ENCODE measurements at regions of chr18 and their contacts with region 1.

Region 1: DNA sequence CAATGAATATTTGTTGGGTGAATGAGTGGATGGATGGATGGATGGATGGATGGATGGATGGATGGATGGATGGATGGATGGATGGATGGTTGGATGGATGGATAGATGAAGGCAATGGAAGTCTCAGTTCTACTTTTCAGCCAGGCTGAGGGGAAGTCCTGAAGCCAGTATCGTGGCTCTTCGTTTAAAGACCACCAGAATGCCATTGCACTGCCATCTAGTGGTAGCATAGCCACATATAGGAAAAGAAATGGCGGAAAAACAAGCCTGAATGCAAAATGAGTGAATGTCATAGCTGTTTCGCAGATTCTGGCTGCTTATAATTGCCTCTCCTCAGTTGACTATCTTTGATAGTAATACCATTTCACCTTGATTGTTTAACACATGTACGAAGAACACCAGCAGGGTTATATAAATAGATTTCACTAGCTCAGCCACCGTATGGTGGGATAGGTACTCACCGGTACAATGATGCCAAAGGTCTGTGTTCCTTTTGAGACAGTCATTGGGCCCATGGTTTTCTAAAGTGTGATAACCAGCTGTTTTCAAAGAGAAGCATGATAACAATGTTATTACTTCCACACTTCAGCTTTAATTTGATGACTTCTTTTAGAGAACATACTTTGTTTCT is 62.3 kb upstream of the GREB1L start:
- DNase-seq: peak; percentile 76
- ATAC-seq: peak; percentile 68
- H3K4me3 ChIP-seq: no peak overlapping the region
- H3K27ac ChIP-seq: no peak overlapping the region
- H3K4me1 ChIP-seq: peaks cover 14% of the 10 kb centered on the region
- H3K27me3 ChIP-seq: no peaks in the 10 kb centered on the region
- CTCF ChIP-seq: peak; percentile 84

Region 2: GRCh38 chr18:21053127-21053526 is 126.6 kb before region 1 on chr18:
- CTCF ChIA-PET with region 1: no interaction called
- POLR2A ChIA-PET with region 1: no interaction called
- intact Hi-C with region 1: loop called (anchors 10 kb)
- DNase-seq: peak; percentile 16
- ATAC-seq: peak; percentile 68
- H3K4me3 ChIP-seq: no peak overlapping the region
- H3K27ac ChIP-seq: no peak overlapping the region
- H3K4me1 ChIP-seq: no peaks in the 10 kb centered on the region
- H3K27me3 ChIP-seq: no peaks in the 10 kb centered on the region
- CTCF ChIP-seq: no peak